ENCODE measurements at regions of chr11 and their contacts with region 1.

Region 1: GRCh38 chr11:122101625-122102291 is 14.3 kb downstream of the BLID start:
- DNase-seq: peak; percentile 89
- H3K4me3 ChIP-seq: peak overlapping the region; percentile 53 to 67 (median 60)
- H3K27ac ChIP-seq: peak overlapping the region; percentile 90 to 95 (median 91)
- H3K4me1 ChIP-seq: peaks cover 0 to 10% (median 8%) of the 10 kb centered on the region in 4 donors
- H3K27me3 ChIP-seq: no peaks in the 10 kb centered on the region
- CTCF ChIP-seq: peak in 3 of 4 experiments; percentile 56 to 76 (median 64)
- EP300 ChIP-seq: peak in 1 of 4 donors; percentile 2
- POLR2A ChIP-seq: no peak

Region 2: GRCh38 chr11:121655537-121656327 is 446.0 kb before region 1 on chr11:
- intact Hi-C with region 1: loop called (anchors 1 kb)
- DNase-seq: peak; percentile 95
- H3K4me3 ChIP-seq: peak overlapping the region; percentile 27 to 50 (median 40)
- H3K27ac ChIP-seq: peak overlapping the region; percentile 83 to 95 (median 89)
- H3K4me1 ChIP-seq: peaks cover 0 to 31% (median 21%) of the 10 kb centered on the region in 4 donors
- H3K27me3 ChIP-seq: no peaks in the 10 kb centered on the region
- CTCF ChIP-seq: peak; percentile 76 to 84 (median 80)
- EP300 ChIP-seq: peak in 2 of 4 donors; percentile 15 to 16
- POLR2A ChIP-seq: no peak

Region 3: GRCh38 chr11:121722431-121723245 is 379.1 kb before region 1 on chr11:
- intact Hi-C with region 1: loop called (anchors 5 kb)
- DNase-seq: peak; percentile 97
- H3K4me3 ChIP-seq: peak overlapping the region; percentile 35 to 56 (median 50)
- H3K27ac ChIP-seq: peak overlapping the region; percentile 88 to 96 (median 89)
- H3K4me1 ChIP-seq: peaks cover 0 to 23% (median 15%) of the 10 kb centered on the region in 4 donors
- H3K27me3 ChIP-seq: no peaks in the 10 kb centered on the region
- CTCF ChIP-seq: peak in 1 of 4 experiments; percentile 13
- EP300 ChIP-seq: peak; percentile 19 to 97 (median 74)
- POLR2A ChIP-seq: peak; percentile 59 to 85

Region 4: DNA sequence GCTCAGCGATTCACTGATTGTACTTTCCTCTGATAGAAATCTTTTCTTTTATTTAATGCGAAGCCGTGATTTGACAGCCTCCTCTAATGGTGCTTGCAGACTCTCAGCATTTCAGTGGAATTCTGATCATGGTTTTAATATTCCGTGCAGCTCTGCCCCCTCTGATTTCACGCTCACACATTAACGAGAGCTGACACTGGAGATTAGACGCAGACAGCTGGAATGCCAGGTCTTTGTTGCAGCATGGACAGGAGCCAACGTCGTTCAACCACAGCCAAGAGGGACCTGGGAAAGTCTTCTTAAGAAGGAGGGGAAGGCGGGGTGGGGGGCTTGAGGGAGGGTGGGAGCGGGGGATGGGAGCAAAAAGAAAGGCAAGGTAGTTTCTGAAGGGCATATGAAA is 172.2 kb before region 1 on chr11:
- intact Hi-C with region 1: no loop called
- DNase-seq: no peak
- H3K4me3 ChIP-seq: peak overlapping the region; percentile 1 to 44 (median 38)
- H3K27ac ChIP-seq: peak overlapping the region; percentile 28 to 55 (median 54)
- H3K4me1 ChIP-seq: peaks cover 0 to 22% (median 14%) of the 10 kb centered on the region in 4 donors
- H3K27me3 ChIP-seq: no peaks in the 10 kb centered on the region
- CTCF ChIP-seq: no peak
- EP300 ChIP-seq: no peak
- POLR2A ChIP-seq: no peak

Region 5: DNA sequence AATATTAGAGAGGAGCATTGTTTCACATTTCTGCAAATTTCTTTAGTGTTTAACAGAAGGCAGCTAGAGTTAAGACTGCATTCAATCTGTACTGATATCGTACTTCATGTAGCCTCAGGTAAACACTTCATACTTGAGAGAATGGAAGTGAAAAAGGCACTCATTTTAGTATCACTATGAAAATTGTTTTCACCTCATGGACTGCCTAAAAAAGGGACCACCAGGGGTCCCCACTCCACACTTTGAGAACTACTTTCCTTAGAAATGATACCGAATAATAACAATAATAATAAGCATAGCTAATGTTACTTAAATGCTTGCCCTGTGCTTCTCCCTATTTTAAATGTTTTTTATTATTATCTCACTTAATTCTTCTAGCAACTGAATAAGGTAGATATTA is 80.9 kb before region 1 on chr11:
- intact Hi-C with region 1: loop called (anchors 5 kb)
- DNase-seq: no peak
- H3K4me3 ChIP-seq: no peak overlapping the region
- H3K27ac ChIP-seq: no peak overlapping the region
- H3K4me1 ChIP-seq: no peaks in the 10 kb centered on the region
- H3K27me3 ChIP-seq: no peaks in the 10 kb centered on the region
- CTCF ChIP-seq: peak in 2 of 4 experiments; percentile 29 to 49
- EP300 ChIP-seq: no peak
- POLR2A ChIP-seq: no peak

Region 6: GRCh38 chr11:122048401-122048800 is 53.4 kb before region 1 on chr11:
- intact Hi-C with region 1: no loop called
- DNase-seq: no peak
- H3K4me3 ChIP-seq: no peak overlapping the region
- H3K27ac ChIP-seq: no peak overlapping the region
- H3K4me1 ChIP-seq: no peaks in the 10 kb centered on the region
- H3K27me3 ChIP-seq: no peaks in the 10 kb centered on the region
- CTCF ChIP-seq: no peak
- EP300 ChIP-seq: no peak
- POLR2A ChIP-seq: no peak

Region 7: GRCh38 chr11:122202951-122203456 is 101.2 kb after region 1 on chr11:
- intact Hi-C with region 1: loop called (anchors 2 kb)
- DNase-seq: peak; percentile 89
- H3K4me3 ChIP-seq: peak overlapping the region; percentile 30 to 54 (median 47)
- H3K27ac ChIP-seq: peak overlapping the region; percentile 60 to 80 (median 66)
- H3K4me1 ChIP-seq: peaks cover 0 to 37% (median 19%) of the 10 kb centered on the region in 4 donors
- H3K27me3 ChIP-seq: no peaks in the 10 kb centered on the region
- CTCF ChIP-seq: peak; percentile 91 to 99 (median 92)
- EP300 ChIP-seq: no peak
- POLR2A ChIP-seq: no peak